ENCODE measurements at regions of chr5 and their contacts with region 1.

Region 1: GRCh38 chr5:36151434-36152323 is at the starts of genes LMBRD2 and SKP2:
- DNase-seq: peak; percentile 99
- ATAC-seq: peak; percentile 97
- H3K4me3 ChIP-seq: peak within 1 kb of the TSS; percentile 84
- H3K27ac ChIP-seq: peak within 1 kb of the TSS; percentile 4; the same call in 1 of the 2 replicates
- H3K4me1 ChIP-seq: peaks cover 38% of the 10 kb centered on the region
- H3K27me3 ChIP-seq: no peaks in the 10 kb centered on the region
- CTCF ChIP-seq: no peak
- total RNA-seq, gene LMBRD2: 9.1 and 21.1 TPM in 2 replicates
- total RNA-seq, gene SKP2: 32.0 and 33.2 TPM in 2 replicates

Region 2: DNA sequence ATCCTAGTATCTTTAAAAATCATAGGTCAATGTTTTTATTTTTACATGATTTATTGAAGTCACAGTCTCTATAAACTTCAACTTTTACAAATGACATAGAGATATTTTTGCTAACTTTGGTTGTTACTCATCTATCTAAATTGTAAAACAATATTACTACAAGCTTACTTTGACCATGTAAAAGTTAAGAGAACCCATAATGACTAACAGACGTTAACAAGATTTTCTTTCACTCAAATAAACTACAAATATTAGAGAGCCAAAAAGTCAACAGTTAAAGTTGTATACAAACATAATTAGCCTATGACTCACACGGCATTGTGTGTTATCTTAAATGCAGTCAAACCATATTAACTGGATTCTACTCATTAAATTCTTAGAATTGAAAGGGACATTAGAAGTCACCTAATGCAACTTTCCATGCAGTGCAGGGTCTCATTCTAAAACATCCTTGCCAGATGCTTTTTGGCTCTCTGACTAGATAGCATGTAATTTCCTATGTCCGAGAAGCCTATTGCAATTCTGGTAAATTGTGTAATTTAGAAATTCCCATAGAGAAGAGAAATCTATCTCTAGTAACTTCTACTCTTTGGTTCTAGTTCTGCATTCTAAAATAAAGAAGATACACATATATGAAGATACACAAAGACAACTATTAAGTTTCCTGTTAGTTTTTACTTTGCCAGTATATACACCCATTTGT is 42.8 kb before region 1 on chr5:
- CTCF ChIA-PET with region 1: no interaction called
- POLR2A ChIA-PET with region 1: interaction called, 4 read pairs
- intact Hi-C with region 1: loop called (anchors 2 kb)
- DNase-seq: peak; percentile 69
- ATAC-seq: peak; percentile 94
- H3K4me3 ChIP-seq: no peak overlapping the region
- H3K27ac ChIP-seq: peak overlapping the region; percentile 20; the same call in 1 of the 2 replicates
- H3K4me1 ChIP-seq: peaks cover 16% of the 10 kb centered on the region
- H3K27me3 ChIP-seq: no peaks in the 10 kb centered on the region
- CTCF ChIP-seq: no peak

Measured in PC-3 (cell line).